ENCODE measurements at regions of chrX and their contacts with region 1.

Region 1: GRCh38 chrX:130552444-130553073 is 150.8 kb downstream of the RBMX2 start:
- DNase-seq: no peak
- H3K4me3 ChIP-seq: no peak overlapping the region
- CTCF ChIP-seq: no peak

Region 2: DNA sequence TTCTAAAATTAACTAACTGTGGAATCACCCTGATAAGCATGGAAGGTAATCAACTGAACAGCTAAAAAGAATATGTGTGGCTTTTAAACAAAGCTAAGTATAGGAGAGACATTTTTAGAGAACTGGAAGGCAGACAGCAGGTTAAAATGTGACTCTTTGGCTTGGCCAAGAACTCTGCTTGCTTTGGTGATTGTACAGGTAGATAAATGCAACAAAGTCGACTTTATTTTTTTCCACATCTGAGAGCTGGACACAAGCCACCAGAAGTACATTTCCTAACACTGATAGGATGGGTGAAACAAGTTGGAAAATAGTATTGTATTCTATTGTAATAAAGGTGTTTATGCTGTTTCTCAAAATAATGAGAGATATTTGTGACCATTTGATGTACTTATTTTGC is 66.7 kb before region 1 on chrX:
- in situ Hi-C with region 1: loop called (anchors 5 kb)
- DNase-seq: no peak
- H3K4me3 ChIP-seq: no peak overlapping the region
- CTCF ChIP-seq: no peak

Measured in astrocyte of the cerebellum (primary cell).